SK-N-SH (cell line): ENCODE measurements at regions of chr3 and their contacts with region 1.

Region 1: DNA sequence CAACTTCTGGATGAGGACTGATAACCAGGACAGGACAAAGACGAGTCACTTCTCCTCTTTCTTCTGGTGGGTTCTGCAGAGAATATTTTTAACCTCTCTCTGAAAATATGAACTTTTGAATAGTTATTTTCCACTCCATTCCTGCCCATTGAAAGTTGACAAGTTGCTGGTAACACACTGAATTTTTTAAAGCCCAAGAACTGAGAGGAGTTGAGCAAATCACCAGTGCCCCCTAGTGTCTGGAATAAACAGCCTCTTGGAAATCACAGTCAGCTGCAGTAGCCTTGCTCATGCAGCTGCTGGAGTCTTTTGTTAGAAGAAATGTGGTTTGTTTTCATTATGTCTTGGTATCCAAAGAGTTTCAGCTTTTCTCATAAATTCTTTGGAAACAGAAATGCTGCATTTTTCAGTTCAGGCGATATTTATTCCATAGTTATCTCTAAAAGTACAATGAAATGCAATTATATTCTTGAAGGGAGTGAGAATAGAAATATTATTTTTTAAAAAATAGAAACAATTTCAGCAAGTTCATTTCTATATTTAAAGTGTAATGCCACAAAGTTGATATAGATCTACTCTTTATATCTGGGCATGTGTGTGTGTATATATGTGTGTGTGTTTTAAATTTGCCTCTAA is 741.0 kb upstream of the CBLB start:
- DNase-seq: peak; percentile 33
- H3K4me3 ChIP-seq: peak overlapping the region in 1 of 2 experiments; percentile 8; a peak in 1 of 4 replicates
- H3K27ac ChIP-seq: peak overlapping the region in 1 of 2 experiments; percentile 69; a peak in 2 of 4 replicates
- H3K4me1 ChIP-seq: peaks cover 4 to 26% of the 10 kb centered on the region in 2 experiments
- H3K27me3 ChIP-seq: no peaks in the 10 kb centered on the region
- CTCF ChIP-seq: peak; percentile 95
- EP300 ChIP-seq: no peak
- RAD21 ChIP-seq: peak; percentile 99

Region 2: GRCh38 chr3:105686278-105686897 is 923.4 kb before region 1 on chr3:
- CTCF ChIA-PET with region 1: interaction called, 20 read pairs
- POLR2A ChIA-PET with region 1: no interaction called
- DNase-seq: peak; percentile 29
- H3K4me3 ChIP-seq: no peak overlapping the region; a peak in 1 of 4 replicates
- H3K27ac ChIP-seq: no peak overlapping the region
- H3K4me1 ChIP-seq: peaks cover 0 to 25% of the 10 kb centered on the region in 2 experiments; a peak in 1 of 4 replicates
- H3K27me3 ChIP-seq: no peaks in the 10 kb centered on the region
- CTCF ChIP-seq: peak; percentile 89
- EP300 ChIP-seq: no peak
- RAD21 ChIP-seq: peak; percentile 85

Region 3: GRCh38 chr3:106452096-106452495 is 157.7 kb before region 1 on chr3:
- CTCF ChIA-PET with region 1: no interaction called
- POLR2A ChIA-PET with region 1: no interaction called
- DNase-seq: no peak
- H3K4me3 ChIP-seq: no peak overlapping the region
- H3K27ac ChIP-seq: no peak overlapping the region
- H3K4me1 ChIP-seq: no peaks in the 10 kb centered on the region; a peak in 2 of 4 replicates
- H3K27me3 ChIP-seq: no peaks in the 10 kb centered on the region
- CTCF ChIP-seq: no peak
- EP300 ChIP-seq: no peak
- RAD21 ChIP-seq: no peak

Region 4: DNA sequence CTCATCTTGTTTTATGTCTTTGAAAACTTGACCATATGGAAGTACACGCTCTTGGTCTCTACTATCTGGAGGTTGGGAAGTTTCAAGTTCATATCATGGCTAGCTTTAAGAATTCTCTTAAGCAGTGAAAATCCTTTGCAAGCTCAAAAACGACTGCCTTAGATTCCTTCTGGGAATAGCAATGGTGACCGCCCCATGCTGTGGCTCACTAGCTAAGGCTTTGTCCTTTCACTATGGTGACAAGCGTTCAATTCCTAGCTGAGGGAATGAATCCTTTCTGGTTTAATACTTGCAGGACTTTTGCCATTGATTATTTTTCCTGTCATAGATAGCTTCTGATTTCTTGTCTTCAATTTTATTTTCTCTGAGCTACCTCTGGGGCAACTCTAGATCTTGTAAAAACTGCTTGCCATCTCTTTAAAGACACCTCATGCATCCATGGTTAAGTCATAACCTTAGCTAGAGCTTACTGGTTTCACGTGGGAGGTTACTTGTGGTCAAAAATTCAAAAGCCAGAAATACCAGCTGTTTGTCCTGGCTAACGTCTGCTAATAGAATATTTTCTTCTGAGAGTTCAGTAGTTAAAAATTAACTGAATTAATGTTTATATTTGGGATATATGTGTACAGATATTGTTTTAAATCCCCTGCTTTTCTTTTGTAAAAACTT is 67.5 kb before region 1 on chr3:
- CTCF ChIA-PET with region 1: no interaction called
- POLR2A ChIA-PET with region 1: no interaction called
- DNase-seq: no peak
- H3K4me3 ChIP-seq: no peak overlapping the region
- H3K27ac ChIP-seq: no peak overlapping the region
- H3K4me1 ChIP-seq: no peaks in the 10 kb centered on the region
- H3K27me3 ChIP-seq: no peaks in the 10 kb centered on the region
- CTCF ChIP-seq: no peak
- EP300 ChIP-seq: no peak
- RAD21 ChIP-seq: no peak

Region 5: DNA sequence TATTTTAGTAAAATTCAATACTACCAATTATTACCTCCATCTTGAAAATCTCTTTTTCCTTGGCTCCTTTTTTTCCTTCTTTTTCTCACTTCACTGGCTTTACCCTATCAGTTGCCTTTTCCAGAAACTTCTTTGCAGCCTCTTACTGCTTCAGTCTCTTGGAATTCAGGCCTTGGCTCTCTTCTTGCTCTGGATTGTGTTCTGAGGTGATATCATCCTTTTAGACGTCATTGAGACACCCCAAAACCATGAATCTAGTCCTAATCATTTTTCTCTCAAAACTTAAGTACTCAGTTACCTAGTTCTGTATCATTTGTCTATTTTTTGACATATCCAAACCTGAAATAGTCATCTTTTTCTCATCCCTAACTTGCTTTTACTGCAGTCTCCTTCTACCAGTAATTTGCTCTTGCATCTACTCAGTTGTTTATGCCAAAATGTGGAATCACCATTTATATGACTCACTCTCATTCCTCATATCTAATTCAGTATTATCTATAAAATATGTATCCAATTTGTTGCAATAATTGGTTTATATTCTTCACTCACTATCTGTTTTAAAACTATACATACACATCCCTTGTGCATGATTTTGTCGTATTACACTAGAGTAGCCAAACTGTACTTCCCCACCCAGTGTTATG is 64.3 kb after region 1 on chr3:
- CTCF ChIA-PET with region 1: no interaction called
- POLR2A ChIA-PET with region 1: no interaction called
- DNase-seq: no peak
- H3K4me3 ChIP-seq: no peak overlapping the region
- H3K27ac ChIP-seq: no peak overlapping the region
- H3K4me1 ChIP-seq: peaks cover 0 to 5% of the 10 kb centered on the region in 2 experiments; a peak in 1 of 4 replicates
- H3K27me3 ChIP-seq: no peaks in the 10 kb centered on the region
- CTCF ChIP-seq: no peak
- EP300 ChIP-seq: no peak
- RAD21 ChIP-seq: no peak

Region 6: GRCh38 chr3:106707347-106707746 is 97.6 kb after region 1 on chr3:
- CTCF ChIA-PET with region 1: no interaction called
- POLR2A ChIA-PET with region 1: no interaction called
- DNase-seq: no peak
- H3K4me3 ChIP-seq: no peak overlapping the region
- H3K27ac ChIP-seq: no peak overlapping the region
- H3K4me1 ChIP-seq: peaks cover 3 to 28% of the 10 kb centered on the region in 2 experiments; a peak in 3 of 4 replicates
- H3K27me3 ChIP-seq: no peaks in the 10 kb centered on the region
- CTCF ChIP-seq: no peak
- EP300 ChIP-seq: no peak
- RAD21 ChIP-seq: no peak